ENCODE measurements at regions of chr5 and their contacts with region 1.

Region 1: GRCh38 chr5:80935811-80936385 is 24.3 kb upstream of the RASGRF2 start:
- DNase-seq: peak; percentile 22
- CTCF ChIP-seq: peak; percentile 17

Region 2: GRCh38 chr5:80168388-80169028 is 767.4 kb before region 1 on chr5:
- CTCF ChIA-PET with region 1: no interaction called
- POLR2A ChIA-PET with region 1: interaction called, 13 read pairs
- DNase-seq: no peak
- CTCF ChIP-seq: no peak

Region 3: DNA sequence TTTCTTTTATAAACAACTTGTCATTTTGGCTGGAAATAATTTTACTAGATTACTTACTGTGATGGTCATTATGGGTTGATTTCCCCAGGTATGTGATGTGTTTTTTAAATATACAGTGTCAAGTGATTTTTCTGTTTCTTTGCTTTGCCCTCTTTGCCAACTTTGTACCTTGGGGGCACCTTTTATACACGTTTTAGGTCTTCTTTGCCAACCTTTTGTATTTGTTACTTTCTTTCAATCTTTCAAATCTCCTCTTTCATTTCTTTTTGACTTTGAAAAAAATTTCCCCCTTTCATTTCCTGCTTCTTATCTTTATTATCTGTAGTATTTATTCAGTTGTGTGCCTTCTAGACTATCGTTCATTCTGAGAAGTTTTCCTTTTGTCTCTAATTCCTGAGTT is 215.7 kb before region 1 on chr5:
- CTCF ChIA-PET with region 1: no interaction called
- POLR2A ChIA-PET with region 1: no interaction called
- DNase-seq: no peak
- CTCF ChIP-seq: no peak